Gastrocnemius medialis (tissue), 4 donors: ENCODE measurements at regions of chr6 and their contacts with region 1.

Region 1: DNA sequence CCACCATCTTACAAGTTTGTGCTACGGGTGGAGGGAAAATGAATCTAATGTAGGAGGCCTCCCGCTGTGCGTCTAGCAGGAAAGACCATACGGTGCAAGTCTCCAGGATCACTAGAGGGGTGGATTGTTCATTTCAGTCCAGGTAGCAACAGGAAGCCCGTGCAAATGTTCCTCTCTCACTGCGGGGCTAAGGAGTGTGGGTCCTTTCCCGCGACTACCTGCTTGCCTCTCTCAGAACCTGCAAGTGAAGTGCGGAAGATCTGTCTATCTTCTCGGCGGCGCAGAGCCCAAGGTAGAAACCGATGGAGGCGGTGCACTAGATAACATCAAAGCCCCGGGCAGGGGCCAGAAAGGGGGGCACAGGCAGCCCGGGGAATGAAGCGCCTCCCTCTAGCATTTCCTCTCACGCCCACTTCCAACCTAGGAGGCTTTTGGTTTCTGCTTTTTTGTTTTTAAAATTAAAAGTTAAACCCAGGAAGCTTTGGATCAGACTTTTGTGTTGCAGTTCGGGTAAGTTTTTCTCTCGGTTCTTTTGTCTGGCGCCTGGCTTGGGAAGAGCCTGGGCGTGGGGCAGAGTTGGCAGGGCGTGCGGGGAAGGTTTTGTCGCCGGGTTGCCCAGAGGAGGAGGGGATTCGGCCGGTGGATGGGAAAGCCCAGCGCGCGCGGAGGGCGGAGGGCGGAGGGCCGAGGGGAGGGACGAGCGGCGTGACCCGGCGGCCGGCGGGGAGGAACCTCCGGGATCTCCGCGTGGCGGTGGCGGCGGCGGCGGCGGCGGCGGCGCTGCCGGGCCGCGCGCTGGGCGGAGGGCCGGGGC is 3.5 kb upstream of the HIVEP1 start:
- DNase-seq: peak; percentile 66 to 74
- ATAC-seq: peak; percentile 27 to 42
- H3K4me3 ChIP-seq: peak overlapping the region; percentile 61 to 95 (median 73)
- H3K27ac ChIP-seq: peak overlapping the region; percentile 92 to 98 (median 96)
- H3K4me1 ChIP-seq: peaks cover 18 to 25% of the 10 kb centered on the region in 2 donors
- H3K27me3 ChIP-seq: no peaks in the 10 kb centered on the region
- CTCF ChIP-seq: no peak
- POLR2A ChIP-seq: peak; percentile 13 to 41

Region 2: GRCh38 chr6:11537229-11538051 is 471.1 kb before region 1 on chr6 and contains the start of gene TMEM170B:
- in situ Hi-C with region 1: no loop called
- intact Hi-C with region 1: loop called (anchors 1 kb)
- DNase-seq: peak; percentile 84 to 87
- ATAC-seq: peak; percentile 85 to 90
- H3K4me3 ChIP-seq: peak within 1 kb of the TSS; percentile 69 to 89 (median 86)
- H3K27ac ChIP-seq: peak within 1 kb of the TSS; percentile 78 to 91 (median 86)
- H3K4me1 ChIP-seq: peaks cover 4 to 21% of the 10 kb centered on the region in 2 donors
- H3K27me3 ChIP-seq: no peaks in the 10 kb centered on the region
- CTCF ChIP-seq: no peak
- POLR2A ChIP-seq: peak; percentile 77 to 90
- total RNA-seq, gene TMEM170B: 5.5 to 22.0 (median 12.3) TPM

Region 3: DNA sequence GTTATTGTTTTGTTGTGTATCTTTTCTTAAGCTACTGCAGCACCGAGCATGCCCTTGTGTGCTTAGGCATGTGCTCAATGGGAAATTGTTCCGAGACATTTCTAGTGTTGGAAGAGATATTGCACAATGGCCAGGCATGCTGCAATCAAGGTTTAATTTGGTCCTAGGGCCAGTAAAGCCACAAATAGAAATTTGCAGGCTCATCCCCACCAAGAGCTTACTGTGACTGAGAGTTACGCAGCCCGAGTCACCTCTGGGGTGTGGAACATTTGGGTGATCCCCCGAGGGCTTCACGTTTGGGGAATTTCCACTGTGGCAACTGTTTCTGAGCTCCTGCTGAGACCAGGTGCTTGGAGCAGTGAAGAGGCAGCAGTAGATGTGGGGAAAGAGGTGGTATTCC is 295.8 kb before region 1 on chr6:
- in situ Hi-C with region 1: no loop called
- intact Hi-C with region 1: loop called (anchors 2 kb)
- DNase-seq: peak; percentile 50 to 81
- ATAC-seq: peak; percentile 91 to 97
- H3K4me3 ChIP-seq: no peak overlapping the region
- H3K27ac ChIP-seq: peak overlapping the region; percentile 61 to 83 (median 77)
- H3K4me1 ChIP-seq: peaks cover 22 to 23% of the 10 kb centered on the region in 2 donors
- H3K27me3 ChIP-seq: no peaks in the 10 kb centered on the region
- CTCF ChIP-seq: no peak
- POLR2A ChIP-seq: peak in 1 of 2 donors; percentile 9

Region 4: DNA sequence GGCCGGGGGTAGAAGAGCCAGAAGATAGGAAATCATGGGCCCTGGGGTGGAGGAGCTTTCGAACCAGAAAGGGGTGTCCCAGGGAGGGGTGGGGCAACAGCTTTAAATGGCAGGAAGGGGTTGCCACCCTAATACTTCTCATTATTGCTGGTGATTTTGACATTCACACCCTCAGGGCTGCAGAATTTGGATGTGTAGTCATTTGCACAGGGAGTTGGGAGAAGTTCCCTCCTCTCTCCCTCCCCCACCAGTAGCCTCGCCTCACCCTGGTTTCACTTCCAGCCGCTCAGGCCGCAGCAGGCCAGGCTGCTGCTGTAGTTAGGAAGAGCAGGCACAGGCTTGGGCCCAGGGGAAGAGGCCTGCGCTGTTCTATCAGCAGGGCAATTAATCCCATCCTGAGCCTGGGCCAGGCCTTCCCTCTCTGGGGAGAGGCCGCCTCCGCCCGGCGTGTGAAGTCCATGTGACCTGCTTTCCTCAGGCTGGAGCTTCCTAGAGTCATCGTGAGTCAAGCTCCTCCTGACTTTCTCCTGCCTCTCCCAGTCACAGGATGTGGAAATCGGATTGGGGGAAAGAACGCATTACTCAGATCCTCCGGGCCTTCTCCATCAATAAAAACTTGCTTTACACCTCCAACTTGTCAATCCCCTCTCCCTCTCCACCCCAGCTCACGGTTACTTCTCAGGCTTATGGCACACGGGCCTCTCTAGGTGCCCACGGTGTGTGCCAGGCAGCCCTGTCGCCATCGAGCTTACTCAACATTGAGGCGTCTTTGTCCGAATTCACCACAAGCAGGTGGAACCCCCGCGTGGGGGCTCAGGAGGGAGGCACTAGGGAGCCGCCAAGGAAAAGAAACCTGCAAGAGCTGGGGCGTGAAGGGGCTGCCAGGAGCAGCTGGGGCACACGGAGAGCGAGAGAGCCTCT is 237.8 kb before region 1 on chr6:
- in situ Hi-C with region 1: no loop called
- intact Hi-C with region 1: loop called (anchors 2 kb)
- DNase-seq: peak; percentile 78 to 88
- ATAC-seq: peak; percentile 90 to 92
- H3K4me3 ChIP-seq: peak overlapping the region in 2 of 4 donors; percentile 6 to 28
- H3K27ac ChIP-seq: peak overlapping the region; percentile 67 to 84 (median 76)
- H3K4me1 ChIP-seq: peaks cover 3 to 6% of the 10 kb centered on the region in 2 donors
- H3K27me3 ChIP-seq: no peaks in the 10 kb centered on the region
- CTCF ChIP-seq: no peak
- POLR2A ChIP-seq: peak; percentile 34 to 55

Region 5: GRCh38 chr6:12266571-12266970 is 258.0 kb after region 1 on chr6:
- in situ Hi-C with region 1: no loop called
- intact Hi-C with region 1: no loop called
- DNase-seq: no peak
- ATAC-seq: no peak
- H3K4me3 ChIP-seq: no peak overlapping the region
- H3K27ac ChIP-seq: no peak overlapping the region
- H3K4me1 ChIP-seq: no peaks in the 10 kb centered on the region
- H3K27me3 ChIP-seq: no peaks in the 10 kb centered on the region
- CTCF ChIP-seq: no peak
- POLR2A ChIP-seq: no peak

Region 6: GRCh38 chr6:12490904-12491571 is 482.5 kb after region 1 on chr6:
- in situ Hi-C with region 1: no loop called
- intact Hi-C with region 1: no loop called
- DNase-seq: no peak
- ATAC-seq: no peak
- H3K4me3 ChIP-seq: no peak overlapping the region
- H3K27ac ChIP-seq: no peak overlapping the region
- H3K4me1 ChIP-seq: no peaks in the 10 kb centered on the region
- H3K27me3 ChIP-seq: no peaks in the 10 kb centered on the region
- CTCF ChIP-seq: no peak
- POLR2A ChIP-seq: no peak